ENCODE measurements at regions of chr1 and their contacts with region 1.

Region 1: DNA sequence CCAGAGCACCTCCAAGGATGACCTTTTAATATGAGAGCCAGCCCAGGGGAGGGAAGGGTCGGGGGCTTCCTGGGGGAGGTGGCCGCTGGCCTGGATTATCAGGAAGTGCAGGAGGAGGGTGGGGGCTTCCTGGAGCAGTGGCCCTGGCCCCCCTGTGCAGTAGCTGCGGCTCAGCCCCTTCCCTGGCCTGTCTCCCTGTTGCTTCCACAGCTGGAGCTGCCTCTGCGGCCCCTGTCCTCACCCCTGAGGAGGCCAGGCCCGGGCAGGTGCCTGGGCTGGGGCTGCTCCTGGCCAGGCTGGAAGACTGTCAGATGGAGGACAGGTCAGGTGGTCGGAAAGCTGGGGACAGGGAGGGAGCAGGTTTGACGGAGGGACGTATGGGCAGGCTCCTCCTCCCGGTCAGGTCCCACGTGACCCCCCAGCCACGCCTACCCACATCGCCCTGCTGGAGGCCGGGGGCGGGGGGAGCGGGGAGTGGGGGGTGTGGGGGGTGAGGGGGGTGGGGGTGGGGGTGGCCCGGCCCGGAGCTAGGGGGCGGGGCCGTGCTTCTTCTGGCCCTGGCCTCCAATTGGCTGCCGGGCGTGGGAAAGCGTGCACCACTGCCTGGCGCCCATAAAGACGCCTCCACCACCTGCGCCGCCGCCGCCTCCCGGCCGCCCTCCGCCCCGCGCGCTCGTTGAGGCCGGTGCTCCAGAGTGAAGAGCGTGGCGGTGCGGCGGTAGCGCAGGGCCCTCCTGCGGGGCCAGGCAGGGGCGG is 10.2 kb upstream of the TNFRSF14 start:
- DNase-seq: peak; percentile 98
- H3K4me3 ChIP-seq: peak overlapping the region; percentile 59
- H3K27ac ChIP-seq: peak overlapping the region in 1 of 2 experiments; percentile 97; a peak in 2 of 4 replicates
- H3K4me1 ChIP-seq: peaks cover 0 to 56% of the 10 kb centered on the region in 2 experiments; a peak in 1 of 4 replicates
- H3K27me3 ChIP-seq: no peaks in the 10 kb centered on the region
- CTCF ChIP-seq: no peak
- EP300 ChIP-seq: no peak
- RAD21 ChIP-seq: no peak

Region 2: DNA sequence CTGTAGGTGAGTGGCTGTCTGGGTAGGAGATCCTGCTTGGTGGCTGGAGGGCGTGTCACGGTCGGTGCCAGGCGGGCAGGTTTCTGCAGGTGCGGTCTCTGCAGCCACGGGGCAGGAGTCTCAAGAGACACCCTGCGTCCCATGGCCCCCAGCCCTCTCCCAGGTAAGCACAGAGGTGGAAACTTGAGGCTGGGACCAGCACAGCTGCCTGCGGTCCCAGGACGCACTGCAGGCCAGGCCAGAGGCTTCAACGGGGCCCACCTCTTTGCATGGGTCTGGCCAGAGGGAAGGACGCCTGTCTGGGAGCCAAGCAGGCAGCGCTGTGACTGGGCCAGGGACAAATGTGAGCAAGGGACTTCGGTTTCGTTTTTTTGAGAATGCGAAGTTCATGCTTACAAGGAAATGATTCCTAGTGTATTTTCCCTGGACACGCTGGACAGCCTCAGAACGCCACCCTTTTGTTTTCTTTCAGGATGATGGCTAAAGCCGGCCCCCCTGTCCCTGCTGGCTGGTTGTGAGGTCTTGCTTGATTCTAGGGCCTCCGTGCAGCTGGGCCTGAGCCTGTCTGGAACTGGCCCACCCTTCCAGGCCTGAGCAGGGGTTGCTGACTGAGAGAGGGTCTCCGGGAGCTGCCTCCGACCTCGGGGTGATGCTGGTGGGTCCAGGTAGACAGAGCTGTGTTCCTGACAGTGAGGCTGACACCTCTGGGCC is 192.9 kb before region 1 on chr1:
- CTCF ChIA-PET with region 1: no interaction called
- POLR2A ChIA-PET with region 1: no interaction called
- DNase-seq: no peak
- H3K4me3 ChIP-seq: no peak overlapping the region
- H3K27ac ChIP-seq: no peak overlapping the region
- H3K4me1 ChIP-seq: no peaks in the 10 kb centered on the region; a peak in 1 of 4 replicates
- H3K27me3 ChIP-seq: no peaks in the 10 kb centered on the region
- CTCF ChIP-seq: no peak
- EP300 ChIP-seq: no peak
- RAD21 ChIP-seq: no peak

Region 3: GRCh38 chr1:2414083-2414958 is 131.6 kb before region 1 on chr1:
- CTCF ChIA-PET with region 1: interaction called, 44 read pairs
- POLR2A ChIA-PET with region 1: no interaction called
- DNase-seq: peak; percentile 91
- H3K4me3 ChIP-seq: peak overlapping the region in 1 of 2 experiments; percentile 49; a peak in 1 of 4 replicates
- H3K27ac ChIP-seq: no peak overlapping the region; a peak in 1 of 4 replicates
- H3K4me1 ChIP-seq: peaks cover 7 to 32% of the 10 kb centered on the region in 2 experiments; a peak in 1 of 4 replicates
- H3K27me3 ChIP-seq: peaks cover 18% of the 10 kb centered on the region
- CTCF ChIP-seq: peak; percentile 87
- EP300 ChIP-seq: no peak
- RAD21 ChIP-seq: peak; percentile 89

Region 4: GRCh38 chr1:2459757-2460156 is 86.2 kb before region 1 on chr1:
- CTCF ChIA-PET with region 1: interaction called, 53 read pairs
- POLR2A ChIA-PET with region 1: interaction called, 13 read pairs
- DNase-seq: peak; percentile 97
- H3K4me3 ChIP-seq: no peak overlapping the region
- H3K27ac ChIP-seq: peak overlapping the region in 1 of 2 experiments; percentile 58; a peak in 1 of 4 replicates
- H3K4me1 ChIP-seq: peaks cover 0 to 16% of the 10 kb centered on the region in 2 experiments; a peak in 1 of 4 replicates
- H3K27me3 ChIP-seq: no peaks in the 10 kb centered on the region
- CTCF ChIP-seq: peak; percentile 45
- EP300 ChIP-seq: no peak
- RAD21 ChIP-seq: peak; percentile 94

Region 5: DNA sequence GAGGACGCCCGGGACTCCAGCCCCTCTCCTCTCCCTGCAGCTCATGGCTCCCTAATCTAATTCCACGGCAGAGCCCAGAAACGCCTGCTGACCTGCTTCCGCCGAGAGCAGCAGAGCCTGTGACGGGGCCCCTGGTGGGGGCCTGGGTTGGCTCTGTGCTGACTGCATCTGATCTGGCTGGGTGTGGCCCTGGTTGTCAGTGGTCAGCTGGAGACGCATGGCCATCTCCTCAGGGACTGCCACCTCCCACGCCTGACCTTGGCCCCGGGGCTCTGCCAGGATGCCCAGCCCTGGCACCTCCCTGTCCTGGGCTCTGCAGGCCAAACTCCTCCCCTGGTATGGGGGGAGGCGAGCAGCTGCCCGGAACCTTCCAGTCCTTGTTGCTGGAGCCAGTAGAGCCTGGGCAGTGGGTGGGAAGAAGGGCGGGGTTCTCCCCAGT is 71.0 kb before region 1 on chr1:
- CTCF ChIA-PET with region 1: interaction called, 26 read pairs
- POLR2A ChIA-PET with region 1: interaction called, 24 read pairs
- DNase-seq: peak; percentile 96
- H3K4me3 ChIP-seq: no peak overlapping the region
- H3K27ac ChIP-seq: peak overlapping the region in 1 of 2 experiments; percentile 96; a peak in 2 of 4 replicates
- H3K4me1 ChIP-seq: peaks cover 0 to 99% of the 10 kb centered on the region in 2 experiments; a peak in 1 of 4 replicates
- H3K27me3 ChIP-seq: no peaks in the 10 kb centered on the region
- CTCF ChIP-seq: no peak
- EP300 ChIP-seq: peak in 1 of 2 experiments; percentile 73; a peak in 2 of 4 replicates
- RAD21 ChIP-seq: peak; percentile 12; the same call in 1 of the 2 replicates

Region 6: GRCh38 chr1:2494323-2494693 is 51.6 kb before region 1 on chr1:
- CTCF ChIA-PET with region 1: interaction called, 10 read pairs
- POLR2A ChIA-PET with region 1: interaction called, 3 read pairs
- DNase-seq: no peak
- H3K4me3 ChIP-seq: no peak overlapping the region
- H3K27ac ChIP-seq: no peak overlapping the region
- H3K4me1 ChIP-seq: no peaks in the 10 kb centered on the region; a peak in 1 of 4 replicates
- H3K27me3 ChIP-seq: no peaks in the 10 kb centered on the region
- CTCF ChIP-seq: no peak
- EP300 ChIP-seq: no peak
- RAD21 ChIP-seq: no peak

Region 7: GRCh38 chr1:2513939-2514652 is 31.8 kb before region 1 on chr1:
- CTCF ChIA-PET with region 1: no interaction called
- POLR2A ChIA-PET with region 1: no interaction called
- DNase-seq: no peak
- H3K4me3 ChIP-seq: no peak overlapping the region
- H3K27ac ChIP-seq: no peak overlapping the region
- H3K4me1 ChIP-seq: no peaks in the 10 kb centered on the region
- H3K27me3 ChIP-seq: no peaks in the 10 kb centered on the region
- CTCF ChIP-seq: no peak
- EP300 ChIP-seq: no peak
- RAD21 ChIP-seq: no peak

Region 8: GRCh38 chr1:2534687-2535441 is 11.1 kb before region 1 on chr1:
- CTCF ChIA-PET with region 1: interaction called, 35 read pairs
- POLR2A ChIA-PET with region 1: interaction called, 6 read pairs
- DNase-seq: no peak
- H3K4me3 ChIP-seq: no peak overlapping the region
- H3K27ac ChIP-seq: no peak overlapping the region
- H3K4me1 ChIP-seq: peaks cover 0 to 11% of the 10 kb centered on the region in 2 experiments; a peak in 1 of 4 replicates
- H3K27me3 ChIP-seq: peaks cover 6% of the 10 kb centered on the region; the same call in 1 of the 2 replicates
- CTCF ChIP-seq: no peak
- EP300 ChIP-seq: no peak
- RAD21 ChIP-seq: no peak

Region 9: GRCh38 chr1:2586154-2587070 is 40.5 kb after region 1 on chr1 and contains the start of gene PRXL2B:
- CTCF ChIA-PET with region 1: interaction called, 13 read pairs
- POLR2A ChIA-PET with region 1: interaction called, 5 read pairs
- DNase-seq: peak; percentile 99
- H3K4me3 ChIP-seq: peak within 1 kb of the TSS; percentile 70 to 86
- H3K27ac ChIP-seq: peak within 1 kb of the TSS; percentile 45 to 91
- H3K4me1 ChIP-seq: peaks cover 0 to 29% of the 10 kb centered on the region in 2 experiments; a peak in 1 of 4 replicates
- H3K27me3 ChIP-seq: no peaks in the 10 kb centered on the region
- CTCF ChIP-seq: no peak
- EP300 ChIP-seq: no peak
- RAD21 ChIP-seq: no peak
- polyA plus RNA-seq, gene PRXL2B: 28.0 and 33.7 TPM in 2 replicates

Measured in SK-N-SH (cell line).